CD4-positive, alpha-beta T cell (primary cell): ENCODE measurements at regions of chr2 and their contacts with region 1.

Region 1: GRCh38 chr2:82158150-82158549 is 1853.6 kb upstream of the LRRTM1 start:
- DNase-seq: no peak
- ATAC-seq: no peak
- H3K4me3 ChIP-seq: no peak overlapping the region
- H3K4me3 Mint-ChIP-seq: no peak overlapping the region
- H3K27ac ChIP-seq: no peak overlapping the region
- H3K27ac Mint-ChIP-seq: no peak overlapping the region
- H3K4me1 ChIP-seq: no peaks in the 10 kb centered on the region
- H3K4me1 Mint-ChIP-seq: no peaks in the 10 kb centered on the region
- H3K27me3 ChIP-seq: no peaks in the 10 kb centered on the region
- H3K27me3 Mint-ChIP-seq: no peaks in the 10 kb centered on the region
- CTCF ChIP-seq: no peak

Region 2: DNA sequence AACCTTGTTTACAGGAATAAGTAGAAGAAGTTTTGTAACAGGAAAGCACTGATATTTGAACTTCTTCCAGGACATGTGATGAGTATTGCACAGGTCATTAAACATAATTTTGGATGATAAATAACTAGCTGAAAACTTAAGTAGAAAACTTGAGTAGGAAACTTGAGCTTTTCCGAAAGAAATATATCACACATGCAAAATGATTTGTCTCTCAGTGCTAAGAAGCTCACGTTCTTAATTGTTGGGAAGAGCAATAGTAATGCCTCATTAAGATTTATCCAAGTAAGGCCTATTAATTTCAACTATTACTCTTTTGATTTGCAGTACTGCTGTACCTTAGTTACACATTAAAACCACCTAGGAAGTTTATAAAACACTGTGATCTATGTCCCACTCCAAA is 68.3 kb after region 1 on chr2:
- CTCF ChIA-PET with region 1: no interaction called
- POLR2A ChIA-PET with region 1: no interaction called
- intact Hi-C with region 1: loop called in 1 of 2 experiments (anchors 2 kb)
- DNase-seq: no peak
- ATAC-seq: no peak
- H3K4me3 ChIP-seq: no peak overlapping the region
- H3K4me3 Mint-ChIP-seq: no peak overlapping the region
- H3K27ac ChIP-seq: no peak overlapping the region
- H3K27ac Mint-ChIP-seq: no peak overlapping the region
- H3K4me1 ChIP-seq: no peaks in the 10 kb centered on the region
- H3K4me1 Mint-ChIP-seq: no peaks in the 10 kb centered on the region
- H3K27me3 ChIP-seq: no peaks in the 10 kb centered on the region
- H3K27me3 Mint-ChIP-seq: no peaks in the 10 kb centered on the region
- CTCF ChIP-seq: no peak